CD4-positive, alpha-beta memory T cell (primary cell): ENCODE measurements at regions of chr13 and their contacts with region 1.

Region 1: GRCh38 chr13:106536244-106537034 is 977 bp upstream of the EFNB2 start:
- DNase-seq: peak; percentile 78 to 82 (median 80)
- H3K4me3 ChIP-seq: peak overlapping the region; percentile 73 to 77
- H3K4me3 Mint-ChIP-seq: peak overlapping the region; percentile 90 to 98 (median 95)
- H3K27ac ChIP-seq: no peak overlapping the region
- H3K27ac Mint-ChIP-seq: peak overlapping the region in 6 of 7 donors; percentile 75 to 91 (median 82)
- H3K4me1 ChIP-seq: peaks cover 24% of the 10 kb centered on the region
- H3K4me1 Mint-ChIP-seq: peaks cover 11 to 21% (median 19%) of the 10 kb centered on the region in 4 donors
- H3K27me3 ChIP-seq: peaks cover 3% of the 10 kb centered on the region
- H3K27me3 Mint-ChIP-seq: peaks cover 13 to 21% of the 10 kb centered on the region in 2 donors

Region 2: GRCh38 chr13:104571161-104571892 is 1965.1 kb before region 1 on chr13:
- CTCF ChIA-PET with region 1: no interaction called
- POLR2A ChIA-PET with region 1: no interaction called
- intact Hi-C with region 1: loop called (anchors 5 kb)
- DNase-seq: no peak
- H3K4me3 ChIP-seq: no peak overlapping the region
- H3K4me3 Mint-ChIP-seq: no peak overlapping the region
- H3K27ac ChIP-seq: no peak overlapping the region
- H3K27ac Mint-ChIP-seq: no peak overlapping the region
- H3K4me1 ChIP-seq: no peaks in the 10 kb centered on the region
- H3K4me1 Mint-ChIP-seq: no peaks in the 10 kb centered on the region
- H3K27me3 ChIP-seq: no peaks in the 10 kb centered on the region
- H3K27me3 Mint-ChIP-seq: no peaks in the 10 kb centered on the region

Region 3: GRCh38 chr13:105139380-105140285 is 1396.8 kb before region 1 on chr13:
- CTCF ChIA-PET with region 1: interaction called, 7 read pairs
- POLR2A ChIA-PET with region 1: interaction called, 9 read pairs
- intact Hi-C with region 1: loop called (anchors 10 kb)
- DNase-seq: peak; percentile 67 to 73 (median 70)
- H3K4me3 ChIP-seq: peak overlapping the region; percentile 49 to 72
- H3K4me3 Mint-ChIP-seq: peak overlapping the region; percentile 85 to 98 (median 94)
- H3K27ac ChIP-seq: peak overlapping the region; percentile 55
- H3K27ac Mint-ChIP-seq: peak overlapping the region; percentile 89 to 98 (median 96)
- H3K4me1 ChIP-seq: peaks cover 12% of the 10 kb centered on the region
- H3K4me1 Mint-ChIP-seq: peaks cover 16 to 20% (median 17%) of the 10 kb centered on the region in 4 donors
- H3K27me3 ChIP-seq: no peaks in the 10 kb centered on the region
- H3K27me3 Mint-ChIP-seq: no peaks in the 10 kb centered on the region

Region 4: GRCh38 chr13:106548064-106548696 is 11.7 kb after region 1 on chr13:
- CTCF ChIA-PET with region 1: interaction called, 12 read pairs
- POLR2A ChIA-PET with region 1: no interaction called
- intact Hi-C with region 1: no loop called
- DNase-seq: no peak
- H3K4me3 ChIP-seq: no peak overlapping the region
- H3K4me3 Mint-ChIP-seq: no peak overlapping the region
- H3K27ac ChIP-seq: no peak overlapping the region
- H3K27ac Mint-ChIP-seq: peak overlapping the region in 1 of 7 donors; percentile 1
- H3K4me1 ChIP-seq: peaks cover 4% of the 10 kb centered on the region
- H3K4me1 Mint-ChIP-seq: peaks cover 20 to 39% (median 32%) of the 10 kb centered on the region in 4 donors
- H3K27me3 ChIP-seq: no peaks in the 10 kb centered on the region
- H3K27me3 Mint-ChIP-seq: no peaks in the 10 kb centered on the region

Region 5: GRCh38 chr13:106917673-106918556 is 381.5 kb after region 1 on chr13:
- CTCF ChIA-PET with region 1: no interaction called
- POLR2A ChIA-PET with region 1: no interaction called
- intact Hi-C with region 1: loop called (anchors 5 kb)
- DNase-seq: peak; percentile 49 to 72 (median 67)
- H3K4me3 ChIP-seq: peak overlapping the region; percentile 29 to 66
- H3K4me3 Mint-ChIP-seq: peak overlapping the region; percentile 78 to 86 (median 82)
- H3K27ac ChIP-seq: no peak overlapping the region
- H3K27ac Mint-ChIP-seq: peak overlapping the region in 5 of 7 donors; percentile 22 to 72 (median 66)
- H3K4me1 ChIP-seq: peaks cover 4% of the 10 kb centered on the region
- H3K4me1 Mint-ChIP-seq: peaks cover 0 to 9% (median 5%) of the 10 kb centered on the region in 4 donors
- H3K27me3 ChIP-seq: no peaks in the 10 kb centered on the region
- H3K27me3 Mint-ChIP-seq: peaks cover 5 to 16% of the 10 kb centered on the region in 2 donors